ENCODE measurements at regions of chr7 and their contacts with region 1.

Region 1: DNA sequence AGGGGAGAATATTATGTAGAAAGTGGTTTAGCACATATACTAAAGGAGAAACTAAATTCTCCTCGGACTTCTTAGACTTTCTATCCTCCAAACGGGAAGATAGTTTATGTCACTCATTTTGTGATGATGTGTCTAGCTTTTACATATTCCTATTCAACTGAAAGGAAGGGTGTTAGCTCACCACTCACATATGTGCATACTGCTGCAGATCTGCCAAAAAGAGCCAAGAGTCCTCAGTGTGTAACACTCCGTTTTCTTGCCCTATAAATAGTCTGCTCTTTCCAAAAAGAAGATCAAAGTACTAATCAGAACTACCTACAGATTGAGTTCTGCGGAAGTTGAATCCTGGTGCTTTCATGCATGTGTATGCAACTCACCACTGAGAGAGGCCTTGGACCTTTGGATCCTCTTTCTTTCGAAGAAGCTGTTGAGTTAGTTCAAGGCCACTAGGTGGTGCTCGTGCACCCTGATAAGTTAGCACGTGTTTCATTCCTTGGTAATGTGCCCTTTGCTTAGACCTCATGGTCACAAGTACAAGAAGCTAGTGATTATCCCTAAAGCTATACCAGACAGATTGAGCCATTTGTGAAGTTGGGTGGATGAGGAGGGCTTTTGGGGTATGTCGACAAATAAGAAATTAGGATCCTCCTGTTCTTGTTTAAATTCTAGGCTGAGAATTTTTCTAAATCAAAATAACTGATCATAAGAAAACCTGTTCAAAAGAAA is 14.1 kb downstream of the YAE1 start:
- DNase-seq: peak; percentile 90
- H3K4me3 Mint-ChIP-seq: no peak overlapping the region
- H3K27ac Mint-ChIP-seq: no peak overlapping the region
- H3K4me1 Mint-ChIP-seq: peaks cover 12% of the 10 kb centered on the region
- H3K27me3 Mint-ChIP-seq: no peaks in the 10 kb centered on the region
- CTCF ChIP-seq: peak; percentile 76

Region 2: GRCh38 chr7:38481401-38481800 is 1098.9 kb before region 1 on chr7:
- CTCF ChIA-PET with region 1: no interaction called
- POLR2A ChIA-PET with region 1: no interaction called
- intact Hi-C with region 1: no loop called
- DNase-seq: no peak
- H3K4me3 Mint-ChIP-seq: no peak overlapping the region
- H3K27ac Mint-ChIP-seq: no peak overlapping the region
- H3K4me1 Mint-ChIP-seq: no peaks in the 10 kb centered on the region
- H3K27me3 Mint-ChIP-seq: peaks cover 14% of the 10 kb centered on the region
- CTCF ChIP-seq: no peak

Region 3: GRCh38 chr7:39566023-39566921 is 14.0 kb before region 1 on chr7 and contains the start of gene YAE1:
- CTCF ChIA-PET with region 1: interaction called, 21 read pairs
- POLR2A ChIA-PET with region 1: interaction called, 5 read pairs
- intact Hi-C with region 1: no loop called
- DNase-seq: peak; percentile 77
- H3K4me3 Mint-ChIP-seq: peak within 1 kb of the TSS; percentile 82
- H3K27ac Mint-ChIP-seq: peak within 1 kb of the TSS; percentile 84
- H3K4me1 Mint-ChIP-seq: peaks cover 4% of the 10 kb centered on the region
- H3K27me3 Mint-ChIP-seq: no peaks in the 10 kb centered on the region
- CTCF ChIP-seq: no peak
- total RNA-seq, gene YAE1: 34.7 and 37.6 TPM in 2 replicates

Region 4: DNA sequence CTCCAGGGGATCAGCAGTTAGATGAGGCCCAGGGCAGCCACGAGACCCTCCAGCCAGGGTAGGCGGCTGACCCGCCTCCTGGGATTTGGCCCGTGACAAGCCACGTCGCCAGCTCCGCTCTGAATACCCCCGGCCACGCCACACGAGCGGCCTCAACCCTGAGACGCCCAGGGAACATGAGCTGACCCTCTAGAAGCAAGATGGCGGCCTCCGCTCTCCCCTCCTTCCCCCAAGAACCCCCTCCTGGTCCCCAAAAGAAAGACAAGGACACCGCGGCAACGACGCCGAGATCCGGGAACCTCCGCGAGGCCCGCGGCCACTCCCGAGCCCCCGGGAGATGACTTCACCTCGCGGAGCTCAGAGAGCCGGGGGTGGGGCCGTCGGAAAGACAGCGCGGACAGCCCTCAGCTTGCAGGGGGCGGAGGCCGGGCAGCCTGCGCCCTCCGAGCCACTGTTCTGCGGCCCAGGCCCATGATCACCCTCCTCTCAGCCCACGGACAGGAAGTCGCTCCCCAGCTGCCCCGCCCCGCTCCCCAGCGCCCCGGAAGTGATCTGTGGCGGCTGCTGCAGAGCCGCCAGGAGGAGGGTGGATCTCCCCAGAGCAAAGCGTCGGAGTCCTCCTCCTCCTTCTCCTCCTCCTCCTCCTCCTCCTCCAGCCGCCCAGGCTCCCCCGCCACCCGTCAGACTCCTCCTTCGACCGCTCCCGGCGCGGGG is 42.9 kb after region 1 on chr7 and contains the start of gene RALA:
- CTCF ChIA-PET with region 1: interaction called, 16 read pairs
- POLR2A ChIA-PET with region 1: interaction called, 35 read pairs
- intact Hi-C with region 1: loop called (anchors 1 kb)
- DNase-seq: peak; percentile 90
- H3K4me3 Mint-ChIP-seq: peak within 1 kb of the TSS; percentile 84
- H3K27ac Mint-ChIP-seq: peak within 1 kb of the TSS; percentile 90
- H3K4me1 Mint-ChIP-seq: peaks cover 37% of the 10 kb centered on the region
- H3K27me3 Mint-ChIP-seq: no peaks in the 10 kb centered on the region
- CTCF ChIP-seq: no peak
- total RNA-seq, gene RALA: 34.1 and 42.7 TPM in 2 replicates

Region 5: DNA sequence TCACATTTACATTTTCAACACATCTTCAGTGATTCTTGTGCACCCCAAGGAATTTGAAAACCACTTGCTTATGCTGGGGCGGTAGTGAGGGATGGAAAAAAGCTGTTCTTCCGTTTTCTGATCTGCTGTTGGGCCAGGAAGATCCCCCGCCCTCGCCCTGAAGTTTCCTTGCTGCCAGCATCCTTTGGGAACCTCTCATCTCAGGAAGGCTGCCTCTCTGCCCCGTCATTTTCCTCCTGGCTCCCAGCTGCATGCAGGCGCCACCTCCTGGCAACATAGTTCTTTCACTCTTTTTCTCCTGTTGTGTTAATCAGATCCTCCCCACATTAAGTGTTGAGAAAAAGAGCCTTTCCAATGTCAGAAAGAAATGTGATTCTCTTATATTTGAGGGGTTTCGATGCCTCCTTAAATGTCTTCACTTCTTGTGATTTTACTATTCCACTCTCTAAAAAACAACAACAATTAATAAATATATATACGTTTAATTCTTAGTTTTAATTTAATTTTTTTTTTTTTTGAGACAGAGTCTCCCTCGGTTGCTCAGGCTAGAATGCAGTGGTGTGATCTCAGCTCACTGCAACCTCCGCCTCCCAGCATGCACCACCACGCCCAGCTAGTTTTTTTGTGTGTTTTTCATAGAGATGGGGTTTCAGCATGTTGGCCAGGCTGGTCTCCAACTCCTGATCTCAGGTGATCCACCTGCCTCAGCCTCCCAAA is 165.9 kb after region 1 on chr7:
- CTCF ChIA-PET with region 1: interaction called, 365 read pairs
- POLR2A ChIA-PET with region 1: interaction called, 33 read pairs
- intact Hi-C with region 1: loop called (anchors 1 kb)
- DNase-seq: peak; percentile 79
- H3K4me3 Mint-ChIP-seq: no peak overlapping the region
- H3K27ac Mint-ChIP-seq: peak overlapping the region; percentile 23
- H3K4me1 Mint-ChIP-seq: peaks cover 12% of the 10 kb centered on the region
- H3K27me3 Mint-ChIP-seq: no peaks in the 10 kb centered on the region
- CTCF ChIP-seq: peak; percentile 49

Region 6: DNA sequence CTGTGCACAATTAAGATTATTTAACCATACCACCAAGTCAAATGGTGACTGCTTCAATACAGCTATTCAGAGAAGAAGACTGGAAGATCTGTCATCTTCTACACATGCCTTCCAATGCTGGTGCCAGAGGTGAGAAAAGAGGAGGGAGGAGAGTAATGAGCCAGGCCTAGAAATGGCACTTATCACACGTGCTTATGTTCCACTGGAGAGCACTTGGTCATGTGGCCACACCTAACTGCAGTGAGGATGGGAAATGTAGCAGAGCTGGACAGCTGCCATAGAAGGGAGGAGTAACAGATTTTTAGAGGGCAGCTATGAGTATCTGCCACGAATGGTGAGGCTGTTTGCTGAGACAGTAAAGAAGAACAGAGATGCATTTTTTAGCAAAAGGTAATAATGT is 477.0 kb after region 1 on chr7:
- CTCF ChIA-PET with region 1: interaction called, 50 read pairs
- POLR2A ChIA-PET with region 1: interaction called, 4 read pairs
- intact Hi-C with region 1: loop called (anchors 2 kb)
- DNase-seq: peak; percentile 51
- H3K4me3 Mint-ChIP-seq: no peak overlapping the region
- H3K27ac Mint-ChIP-seq: peak overlapping the region; percentile 1
- H3K4me1 Mint-ChIP-seq: peaks cover 17% of the 10 kb centered on the region
- H3K27me3 Mint-ChIP-seq: no peaks in the 10 kb centered on the region
- CTCF ChIP-seq: no peak